Mucosa of descending colon (tissue), 3 donors: ENCODE measurements at regions of chr1 and their contacts with region 1.

Region 1: DNA sequence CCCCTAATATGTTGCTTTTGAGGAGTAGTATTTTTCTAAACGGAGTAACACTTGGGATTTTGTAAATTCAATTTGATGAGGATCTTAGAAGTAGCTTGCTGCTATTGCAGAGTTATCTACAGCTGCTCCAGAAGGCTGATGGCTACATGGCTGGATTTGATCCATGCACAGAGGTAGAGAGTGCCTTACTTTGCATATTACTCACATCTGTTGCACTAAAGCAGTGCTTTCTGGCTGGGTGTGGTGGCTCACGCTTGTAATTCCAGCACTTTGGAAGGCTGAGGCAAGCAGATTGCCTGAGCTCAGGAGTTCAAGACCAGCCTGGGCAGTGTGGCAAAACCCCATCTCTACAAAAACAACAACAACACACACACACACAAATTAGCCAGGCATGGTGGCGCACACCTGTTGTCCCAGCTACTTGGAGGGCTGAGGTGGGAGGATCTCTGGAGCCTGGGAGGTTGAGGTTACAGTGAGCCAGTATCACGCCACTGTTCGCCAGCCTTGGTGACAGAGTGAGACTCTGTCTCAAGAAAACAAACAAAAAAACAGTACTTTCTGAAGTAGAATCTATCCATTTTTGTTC is 24.6 kb downstream of the RALGPS2 start:
- DNase-seq: no peak
- ATAC-seq: peak; percentile 56
- H3K4me3 ChIP-seq: no peak overlapping the region
- H3K4me1 ChIP-seq: no peaks in the 10 kb centered on the region
- CTCF ChIP-seq: no peak

Region 2: DNA sequence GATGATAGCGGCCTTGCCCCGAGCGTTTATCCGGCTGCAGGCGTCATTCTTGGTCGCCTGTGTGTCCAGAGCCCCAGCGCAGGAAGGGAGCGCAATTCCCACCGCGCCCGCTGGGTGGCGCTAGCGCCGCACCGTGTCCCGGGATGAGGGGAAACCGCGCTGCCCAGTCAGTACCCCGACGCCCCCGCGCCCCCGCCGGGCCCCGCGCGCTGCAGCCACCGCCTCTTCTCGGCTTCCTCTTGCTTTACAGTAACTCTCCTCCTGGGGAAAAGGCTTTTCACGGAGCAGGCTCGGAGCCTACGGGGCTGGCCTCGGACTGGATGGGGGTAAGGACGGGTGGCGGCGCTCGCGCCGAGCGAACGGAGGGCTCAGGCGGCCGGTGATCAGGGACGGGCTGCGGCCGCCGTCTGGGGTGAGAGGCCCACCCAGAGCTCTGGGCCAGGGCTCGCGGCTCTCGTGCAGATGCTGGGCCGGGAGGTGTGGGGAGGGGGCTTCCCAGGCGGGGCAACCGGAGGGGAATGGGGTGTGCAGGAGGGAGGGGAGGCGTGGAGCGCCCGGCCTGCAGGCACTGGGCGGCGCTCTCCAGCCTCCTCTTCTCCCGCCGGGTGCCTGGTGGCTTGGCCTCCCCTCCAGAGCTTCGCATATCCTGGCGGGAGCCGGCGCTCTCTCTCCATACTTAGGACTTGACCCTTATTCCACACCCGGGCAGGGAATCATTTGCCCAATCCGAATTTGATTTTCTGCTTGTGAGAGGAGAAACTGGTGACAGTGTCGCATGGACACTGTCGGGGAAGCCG is 206.9 kb before region 1 on chr1:
- intact Hi-C with region 1: loop called (anchors 2 to 5 kb)
- DNase-seq: peak; percentile 90 to 97 (median 95)
- ATAC-seq: peak; percentile 91
- H3K4me3 ChIP-seq: peak overlapping the region; percentile 56
- H3K4me1 ChIP-seq: peaks cover 15% of the 10 kb centered on the region
- CTCF ChIP-seq: peak; percentile 99

Region 3: GRCh38 chr1:178672434-178672833 is 77.2 kb before region 1 on chr1:
- intact Hi-C with region 1: no loop called
- DNase-seq: no peak
- ATAC-seq: no peak
- H3K4me3 ChIP-seq: no peak overlapping the region
- H3K4me1 ChIP-seq: no peaks in the 10 kb centered on the region
- CTCF ChIP-seq: no peak